Breast epithelium (tissue), 4 donors: ENCODE measurements at regions of chr18 and their contacts with region 1.

Region 1: DNA sequence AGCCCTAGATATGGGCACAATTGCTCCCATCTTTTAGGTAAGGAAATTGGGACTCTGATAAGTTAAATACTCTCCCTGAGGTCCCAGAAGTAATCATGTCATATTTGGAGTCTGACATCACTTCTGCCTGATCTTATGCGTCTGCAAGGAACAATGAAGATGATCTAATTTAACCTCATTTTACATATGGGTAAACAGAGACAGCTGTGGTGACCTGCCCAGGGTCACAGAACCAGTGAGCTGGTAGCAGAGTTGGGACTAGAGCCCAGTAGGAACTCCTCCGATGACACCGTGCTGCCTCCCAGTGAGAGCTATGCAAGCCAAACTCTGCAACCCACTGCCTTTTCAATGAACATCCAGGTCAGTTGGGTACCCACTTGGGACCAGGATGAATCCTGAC is 17.8 kb downstream of the CTAGE1 start:
- DNase-seq: no peak
- H3K4me3 ChIP-seq: no peak overlapping the region
- H3K27ac ChIP-seq: no peak overlapping the region
- H3K4me1 ChIP-seq: no peaks in the 10 kb centered on the region
- H3K27me3 ChIP-seq: no peaks in the 10 kb centered on the region
- CTCF ChIP-seq: no peak
- POLR2A ChIP-seq: no peak

Region 2: DNA sequence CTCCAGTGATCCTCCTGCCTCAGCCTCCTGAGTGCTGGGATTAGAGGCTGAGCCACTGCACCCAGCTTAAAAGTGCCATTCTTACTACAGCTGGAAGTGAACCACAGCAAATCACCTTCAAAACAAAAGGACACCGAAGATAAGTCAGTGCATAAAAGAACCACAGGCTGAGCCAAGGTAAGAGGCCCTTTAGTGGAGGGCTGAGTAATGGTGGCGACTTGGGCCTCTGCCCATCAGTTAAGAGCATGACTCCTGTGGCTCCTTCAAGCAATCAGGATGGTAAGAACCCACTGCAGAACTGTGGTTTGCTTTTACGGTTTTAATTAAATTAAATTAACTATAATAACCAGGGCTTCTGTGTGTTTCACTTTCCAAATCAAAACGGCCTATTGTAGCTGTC is 57.3 kb before region 1 on chr18:
- intact Hi-C with region 1: loop called (anchors 2 kb)
- DNase-seq: peak in 1 of 2 donors; percentile 53
- H3K4me3 ChIP-seq: no peak overlapping the region
- H3K27ac ChIP-seq: peak overlapping the region; percentile 12 to 21
- H3K4me1 ChIP-seq: no peaks in the 10 kb centered on the region
- H3K27me3 ChIP-seq: no peaks in the 10 kb centered on the region
- CTCF ChIP-seq: no peak
- POLR2A ChIP-seq: no peak